A673 (cell line): ENCODE measurements at regions of chr7 and their contacts with region 1.

Region 1: DNA sequence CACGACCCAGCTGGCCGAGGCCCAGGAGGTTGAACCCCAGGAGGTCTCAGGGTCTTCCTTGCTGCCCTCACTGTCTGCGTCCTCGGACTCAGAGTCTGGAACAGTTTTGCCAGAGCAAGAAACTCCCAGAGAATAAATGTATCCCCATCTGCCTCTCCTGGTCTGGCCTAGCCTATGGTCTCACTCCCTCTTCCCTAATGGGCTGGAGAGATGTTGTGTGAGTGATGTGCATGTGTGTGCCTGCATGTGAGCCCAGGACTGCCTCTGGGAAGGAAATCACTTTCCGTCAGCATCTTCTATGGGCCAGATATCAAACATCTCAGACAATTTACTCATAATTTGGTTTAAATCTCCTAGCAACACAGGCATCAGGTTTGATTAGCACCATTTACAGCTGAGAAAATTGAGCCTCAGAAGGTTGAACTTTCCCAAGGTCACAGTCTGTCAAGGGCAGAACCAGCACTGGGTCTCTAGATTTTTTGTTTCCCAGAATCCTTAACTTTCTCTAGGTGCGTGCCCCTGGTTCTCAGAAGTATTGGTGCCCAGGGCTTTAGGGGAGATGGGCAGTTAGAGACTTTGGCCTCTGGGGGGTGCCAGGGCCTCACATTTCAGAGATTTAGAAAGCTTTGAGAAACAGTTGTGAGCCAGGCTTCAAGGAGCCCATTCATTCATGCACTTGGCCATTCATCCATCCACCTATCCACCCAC is 4.9 kb downstream of the TMEM270 start:
- DNase-seq: peak; percentile 58
- H3K4me3 ChIP-seq: no peak overlapping the region
- H3K27ac ChIP-seq: no peak overlapping the region
- H3K4me1 ChIP-seq: no peaks in the 10 kb centered on the region
- H3K27me3 ChIP-seq: no peaks in the 10 kb centered on the region
- CTCF ChIP-seq: peak; percentile 60

Region 2: DNA sequence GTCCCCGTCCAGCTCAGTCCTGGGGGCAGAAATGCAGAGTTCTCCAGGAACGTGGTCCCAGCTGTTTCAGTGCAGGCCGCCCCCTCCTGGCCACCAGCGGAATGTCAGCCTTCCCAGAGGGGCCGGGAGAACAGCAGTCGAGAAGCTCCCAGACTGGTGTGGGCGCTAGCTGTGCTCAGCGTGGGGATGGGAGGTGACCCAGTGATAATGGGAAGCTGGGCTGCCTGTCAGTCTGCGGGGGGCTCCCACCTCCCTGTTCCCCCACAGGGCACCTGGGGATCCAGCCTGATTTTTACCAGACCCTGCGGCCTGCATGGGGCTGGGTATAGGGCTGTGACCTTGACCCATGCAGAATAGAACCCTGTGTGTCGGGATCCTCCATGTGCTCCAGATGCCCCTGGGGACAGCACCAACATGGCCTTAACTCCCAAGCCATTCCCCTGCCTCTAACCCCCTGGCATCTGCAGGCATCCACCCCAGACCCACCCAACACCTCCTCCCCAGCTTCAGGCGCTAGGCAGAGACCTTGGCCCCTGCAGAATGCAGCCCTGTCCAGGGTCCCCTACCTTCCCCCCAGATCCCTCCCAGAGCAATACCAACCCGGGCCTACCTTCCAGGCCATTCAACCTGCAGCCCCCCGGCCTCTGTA is 161.1 kb after region 1 on chr7:
- CTCF ChIA-PET with region 1: interaction called, 4 read pairs
- POLR2A ChIA-PET with region 1: no interaction called
- intact Hi-C with region 1: loop called (anchors 2 kb)
- DNase-seq: peak; percentile 86
- H3K4me3 ChIP-seq: no peak overlapping the region
- H3K27ac ChIP-seq: peak overlapping the region; percentile 40
- H3K4me1 ChIP-seq: peaks cover 40% of the 10 kb centered on the region
- H3K27me3 ChIP-seq: no peaks in the 10 kb centered on the region
- CTCF ChIP-seq: peak; percentile 98

Region 3: GRCh38 chr7:74206589-74207120 is 340.8 kb after region 1 on chr7:
- CTCF ChIA-PET with region 1: no interaction called
- POLR2A ChIA-PET with region 1: no interaction called
- intact Hi-C with region 1: loop called (anchors 10 kb)
- DNase-seq: peak; percentile 69
- H3K4me3 ChIP-seq: peak overlapping the region; percentile 40
- H3K27ac ChIP-seq: no peak overlapping the region
- H3K4me1 ChIP-seq: no peaks in the 10 kb centered on the region
- H3K27me3 ChIP-seq: no peaks in the 10 kb centered on the region
- CTCF ChIP-seq: peak; percentile 99

Region 4: GRCh38 chr7:74343281-74344127 is 477.6 kb after region 1 on chr7:
- CTCF ChIA-PET with region 1: no interaction called
- POLR2A ChIA-PET with region 1: no interaction called
- intact Hi-C with region 1: no loop called
- DNase-seq: no peak
- H3K4me3 ChIP-seq: no peak overlapping the region
- H3K27ac ChIP-seq: no peak overlapping the region
- H3K4me1 ChIP-seq: no peaks in the 10 kb centered on the region
- H3K27me3 ChIP-seq: no peaks in the 10 kb centered on the region
- CTCF ChIP-seq: no peak